Transverse colon (tissue), 4 donors: ENCODE measurements at regions of chr14 and their contacts with region 1.

Region 1: DNA sequence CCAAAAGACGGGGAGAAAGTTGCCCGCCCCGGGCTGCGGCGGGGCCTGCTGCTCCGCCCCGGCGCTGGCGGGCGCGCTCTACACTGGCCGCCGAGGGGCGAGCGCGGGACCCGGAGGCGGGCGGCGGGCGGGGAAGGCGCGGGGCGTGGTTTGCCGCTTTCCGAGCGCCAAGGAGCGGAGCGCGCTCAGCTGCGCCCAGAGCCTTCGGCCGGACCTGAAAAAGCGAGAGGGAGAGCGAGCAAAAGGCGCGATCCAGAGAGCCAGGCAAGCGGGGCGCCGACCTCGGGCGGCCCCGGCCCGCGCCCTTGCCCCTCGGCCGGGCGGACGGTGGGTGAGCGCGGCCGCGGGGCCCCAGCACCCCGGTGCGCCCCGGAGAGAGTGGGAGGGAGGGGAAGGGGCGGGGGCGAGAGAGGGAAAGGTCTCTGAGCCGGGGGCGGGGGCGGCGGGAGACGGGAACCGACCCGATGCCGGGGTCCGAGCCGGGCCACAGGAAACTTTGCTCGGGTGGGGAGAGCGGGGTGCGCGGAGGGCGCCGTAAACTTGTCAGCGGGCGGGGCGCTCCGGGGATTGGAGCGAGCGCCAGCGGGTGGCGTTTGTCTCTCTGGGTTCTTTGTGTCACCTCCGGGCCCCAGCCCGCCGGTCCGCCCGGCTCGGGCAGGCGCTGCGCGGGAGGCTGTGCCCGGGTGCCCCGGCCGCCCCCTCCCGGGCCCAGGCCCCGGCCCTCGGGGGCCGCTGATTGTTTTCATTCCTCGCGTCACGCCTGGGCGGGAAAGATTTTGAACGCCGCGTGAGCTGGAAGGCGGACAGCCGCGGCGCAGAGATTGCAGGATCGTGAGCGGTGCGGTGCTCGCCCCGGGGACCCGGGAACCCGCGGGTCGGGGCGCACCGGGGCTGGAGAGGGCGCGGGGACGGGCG is at the start of gene SYNE2:
- DNase-seq: peak; percentile 86
- H3K4me3 ChIP-seq: peak within 1 kb of the TSS; percentile 47 to 100 (median 88)
- H3K27ac ChIP-seq: peak within 1 kb of the TSS; percentile 93 to 98 (median 96)
- H3K4me1 ChIP-seq: peaks cover 6 to 19% (median 10%) of the 10 kb centered on the region in 4 donors
- H3K27me3 ChIP-seq: no peaks in the 10 kb centered on the region
- CTCF ChIP-seq: peak in 2 of 5 experiments; percentile 20 to 41
- EP300 ChIP-seq: no peak
- POLR2A ChIP-seq: peak; percentile 29
- total RNA-seq, gene SYNE2: 242 to 491 (median 304) TPM

Region 2: GRCh38 chr14:62029569-62029924 is 1823.5 kb before region 1 on chr14:
- in situ Hi-C with region 1: no loop called
- intact Hi-C with region 1: no loop called
- DNase-seq: no peak
- H3K4me3 ChIP-seq: no peak overlapping the region
- H3K27ac ChIP-seq: no peak overlapping the region
- H3K4me1 ChIP-seq: no peaks in the 10 kb centered on the region
- H3K27me3 ChIP-seq: no peaks in the 10 kb centered on the region
- CTCF ChIP-seq: no peak
- EP300 ChIP-seq: no peak
- POLR2A ChIP-seq: no peak

Region 3: DNA sequence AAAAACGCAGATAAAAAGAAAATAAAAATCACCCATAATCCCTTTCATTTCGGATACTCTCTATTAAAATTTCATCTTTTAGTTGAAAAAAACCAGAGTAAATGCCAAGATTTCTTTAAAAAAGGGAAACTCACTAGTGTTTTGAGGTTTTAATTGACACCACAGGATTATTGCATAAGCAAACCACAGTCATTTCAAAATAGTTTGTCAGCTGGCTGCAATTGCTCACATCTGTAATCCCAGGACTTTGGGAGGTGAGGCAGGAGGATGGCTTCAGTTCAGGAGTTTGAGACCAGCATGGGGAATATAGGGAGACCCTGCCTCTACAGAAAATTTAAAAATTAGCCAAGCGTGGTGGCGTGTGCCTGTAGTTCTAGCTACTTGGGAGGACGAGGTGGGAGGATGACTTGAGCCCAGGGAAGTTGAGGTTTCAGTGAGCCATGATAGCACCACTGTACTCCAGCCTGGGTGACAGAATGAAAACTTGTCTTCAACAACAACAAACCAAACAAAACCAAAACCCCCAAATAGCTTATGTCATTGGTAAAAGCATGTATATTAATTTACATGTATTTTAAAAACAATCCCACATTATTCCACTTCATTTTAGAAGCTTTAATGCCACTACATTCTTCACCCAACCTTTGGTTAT is 48.5 kb after region 1 on chr14:
- in situ Hi-C with region 1: no loop called
- intact Hi-C with region 1: loop called (anchors 10 kb)
- DNase-seq: no peak
- H3K4me3 ChIP-seq: no peak overlapping the region
- H3K27ac ChIP-seq: no peak overlapping the region
- H3K4me1 ChIP-seq: peaks cover 4 to 10% (median 5%) of the 10 kb centered on the region in 4 donors
- H3K27me3 ChIP-seq: no peaks in the 10 kb centered on the region
- CTCF ChIP-seq: no peak
- EP300 ChIP-seq: no peak
- POLR2A ChIP-seq: no peak